PC-3 (cell line): ENCODE measurements at regions of chr15 and their contacts with region 1.

Region 1: DNA sequence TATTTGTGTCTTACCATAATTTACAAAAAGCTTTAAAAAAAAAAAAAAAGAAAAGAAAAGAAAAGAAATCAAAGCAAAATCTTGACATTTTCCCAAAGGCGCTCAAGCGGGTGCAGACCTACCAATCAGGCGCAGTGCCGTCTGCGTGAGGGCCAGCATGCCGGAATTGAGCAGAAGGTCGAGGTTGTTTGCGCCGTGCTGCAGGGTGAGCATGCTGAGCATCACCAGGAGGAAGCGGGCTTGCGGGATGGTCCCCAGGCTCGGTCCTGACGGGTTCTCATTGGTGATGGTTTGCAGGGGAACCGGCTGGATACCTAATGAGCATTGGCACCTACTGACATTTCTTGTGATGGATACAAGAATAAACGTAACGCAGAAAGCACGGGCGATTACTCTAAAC is 93.9 kb downstream of the HERC2 start:
- DNase-seq: no peak
- ATAC-seq: no peak
- H3K4me3 ChIP-seq: no peak overlapping the region
- H3K27ac ChIP-seq: no peak overlapping the region
- H3K4me1 ChIP-seq: no peaks in the 10 kb centered on the region
- H3K27me3 ChIP-seq: no peaks in the 10 kb centered on the region
- CTCF ChIP-seq: no peak

Region 2: GRCh38 chr15:26889298-26889898 is 1338.7 kb before region 1 on chr15:
- CTCF ChIA-PET with region 1: no interaction called
- POLR2A ChIA-PET with region 1: no interaction called
- intact Hi-C with region 1: loop called (anchors 10 kb)
- DNase-seq: peak; percentile 83
- ATAC-seq: peak; percentile 42
- H3K4me3 ChIP-seq: peak overlapping the region; percentile 63
- H3K27ac ChIP-seq: no peak overlapping the region
- H3K4me1 ChIP-seq: peaks cover 10% of the 10 kb centered on the region; the same call in 1 of the 2 replicates
- H3K27me3 ChIP-seq: no peaks in the 10 kb centered on the region
- CTCF ChIP-seq: peak; percentile 84

Region 3: DNA sequence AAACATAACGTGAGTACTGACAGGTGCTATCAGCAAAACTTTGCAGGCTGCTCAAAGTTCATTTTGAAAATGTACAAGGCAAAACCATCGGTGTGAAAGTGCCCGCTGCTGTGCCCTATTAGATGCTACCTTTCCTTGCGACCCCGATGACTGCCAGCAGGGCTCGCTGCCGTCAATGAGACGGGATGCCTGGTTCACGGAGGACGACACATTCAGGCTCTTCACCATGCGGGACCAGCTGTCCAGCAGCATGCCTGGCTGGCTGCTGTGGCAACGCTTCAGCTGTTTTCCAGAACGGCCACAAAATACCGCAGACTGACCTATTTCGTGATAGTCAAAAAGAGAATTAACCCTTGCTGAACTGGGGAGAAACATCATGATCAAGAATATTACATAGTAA is 36.3 kb before region 1 on chr15:
- CTCF ChIA-PET with region 1: interaction called, 10 read pairs
- POLR2A ChIA-PET with region 1: no interaction called
- intact Hi-C with region 1: no loop called
- DNase-seq: no peak
- ATAC-seq: no peak
- H3K4me3 ChIP-seq: no peak overlapping the region
- H3K27ac ChIP-seq: no peak overlapping the region
- H3K4me1 ChIP-seq: no peaks in the 10 kb centered on the region
- H3K27me3 ChIP-seq: no peaks in the 10 kb centered on the region
- CTCF ChIP-seq: no peak